ENCODE measurements at regions of chr15 and their contacts with region 1.

Region 1: GRCh38 chr15:22806156-22806555 is 19.7 kb downstream of the NIPA1 start:
- DNase-seq: no peak
- H3K4me3 ChIP-seq: no peak overlapping the region
- H3K27ac ChIP-seq: no peak overlapping the region
- H3K4me1 ChIP-seq: no peaks in the 10 kb centered on the region
- H3K27me3 ChIP-seq: no peaks in the 10 kb centered on the region
- CTCF ChIP-seq: no peak

Region 2: GRCh38 chr15:22827125-22827524 is 21.0 kb after region 1 on chr15:
- CTCF ChIA-PET with region 1: no interaction called
- POLR2A ChIA-PET with region 1: interaction called, 13 read pairs
- intact Hi-C with region 1: no loop called
- DNase-seq: no peak
- H3K4me3 ChIP-seq: no peak overlapping the region
- H3K27ac ChIP-seq: no peak overlapping the region
- H3K4me1 ChIP-seq: no peaks in the 10 kb centered on the region
- H3K27me3 ChIP-seq: no peaks in the 10 kb centered on the region
- CTCF ChIP-seq: no peak

Measured in PC-9 (cell line).